KBM-7 (cell line): ENCODE measurements at regions of chr17 and their contacts with region 1.

Region 1: DNA sequence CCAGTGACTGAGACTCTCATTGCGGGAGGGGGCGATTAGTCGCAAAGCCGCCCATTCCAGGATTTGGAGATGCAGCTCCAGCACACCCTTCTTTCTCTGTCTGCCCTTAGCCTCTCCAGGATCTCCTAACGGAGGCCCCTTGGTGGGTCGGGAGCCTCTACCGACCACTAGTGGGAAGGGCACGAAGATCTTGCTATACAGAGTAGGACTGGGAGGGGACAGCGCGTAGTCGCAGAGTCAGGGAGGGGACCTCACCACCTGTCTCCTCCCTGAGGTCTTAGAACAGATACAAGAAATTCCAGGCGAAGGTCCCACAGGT is 588 bp upstream of the SMTNL2 start:
- DNase-seq: peak; percentile 43

Region 2: GRCh38 chr17:4823373-4824089 is 239.8 kb after region 1 on chr17:
- in situ Hi-C with region 1: no loop called
- DNase-seq: no peak

Region 3: DNA sequence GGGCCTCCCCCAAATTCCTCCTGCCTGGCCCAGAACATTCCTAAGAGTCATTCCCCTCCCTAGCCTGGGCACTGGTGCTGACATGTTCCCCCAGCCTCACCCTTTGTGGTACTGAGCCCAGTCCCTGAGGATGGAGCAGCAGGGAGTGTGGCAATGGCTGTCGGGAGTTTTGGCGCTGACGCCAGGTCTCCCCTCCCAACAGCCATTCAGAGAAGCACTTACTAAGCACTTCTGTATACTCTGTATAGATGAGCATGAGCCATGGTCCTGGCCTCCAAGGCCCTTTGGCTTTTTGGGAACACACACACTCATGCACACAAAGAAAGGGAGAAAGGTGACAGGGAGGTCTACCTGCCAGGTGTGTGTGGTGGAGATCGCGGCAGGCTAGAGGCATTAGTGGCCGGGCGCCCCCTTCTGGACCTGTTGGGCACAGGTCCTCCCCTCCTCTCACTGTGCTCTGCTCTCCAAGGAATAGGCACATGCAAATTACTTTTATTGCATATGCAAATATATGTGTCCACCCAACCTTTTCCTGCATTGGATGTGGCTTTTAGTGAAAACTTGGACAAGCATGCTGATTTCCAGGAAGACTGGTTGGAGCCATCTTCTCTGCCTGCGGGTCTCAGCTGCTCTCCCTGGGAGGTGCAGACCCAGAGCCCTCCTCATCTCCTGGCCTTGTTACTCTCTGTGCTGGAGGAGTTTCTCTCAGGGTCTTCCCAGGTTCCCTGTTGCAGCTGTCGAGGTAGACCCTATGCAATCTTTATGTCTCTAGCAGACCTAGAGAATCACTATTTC is 298.2 kb after region 1 on chr17:
- in situ Hi-C with region 1: loop called (anchors 25 kb)
- DNase-seq: peak; percentile 63

Region 4: DNA sequence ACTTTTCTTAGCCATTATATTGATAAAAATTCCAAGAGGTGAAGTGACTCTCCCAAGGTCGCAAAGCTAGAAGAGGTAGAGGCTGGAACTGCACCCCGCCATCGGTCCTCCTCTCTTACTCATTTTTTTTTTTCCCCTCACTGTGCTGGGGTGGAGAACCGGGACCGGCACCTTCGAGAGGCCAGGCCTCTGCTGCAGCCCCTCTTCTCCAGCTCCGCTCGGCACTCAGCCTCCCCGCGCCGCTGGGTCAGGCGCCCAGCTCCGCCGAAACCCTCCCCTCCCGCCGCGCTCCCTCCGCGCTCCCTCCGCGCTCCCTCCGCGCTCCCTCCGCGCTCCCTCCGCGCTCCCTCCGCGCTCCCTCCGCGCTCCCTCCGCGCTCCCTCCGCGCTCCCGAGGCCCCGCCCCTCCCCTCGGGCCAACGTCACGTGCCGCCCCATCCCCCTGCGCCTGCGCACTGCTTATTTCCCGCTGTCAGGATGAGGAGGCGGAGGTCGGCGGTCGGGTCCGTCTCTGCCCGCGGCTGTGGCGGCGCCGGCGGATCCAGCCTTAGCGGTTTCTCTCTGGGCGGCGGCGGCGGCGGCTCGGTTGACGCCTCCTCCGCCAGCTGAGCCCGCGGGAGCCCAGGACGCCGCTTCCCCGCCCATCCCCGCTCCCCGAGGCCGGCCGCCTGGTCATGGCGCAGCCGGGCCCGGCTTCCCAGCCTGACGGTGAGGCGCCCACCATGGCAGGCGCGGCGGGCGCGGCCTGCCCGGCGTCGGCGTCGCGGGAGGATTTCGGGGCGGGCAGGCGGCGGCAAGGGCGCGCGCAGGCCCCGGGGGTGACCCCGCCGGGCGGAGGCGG is 698.3 kb after region 1 on chr17 and contains the start of gene RABEP1:
- in situ Hi-C with region 1: no loop called
- DNase-seq: peak; percentile 71